ENCODE measurements at regions of chr11 and their contacts with region 1.

Region 1: DNA sequence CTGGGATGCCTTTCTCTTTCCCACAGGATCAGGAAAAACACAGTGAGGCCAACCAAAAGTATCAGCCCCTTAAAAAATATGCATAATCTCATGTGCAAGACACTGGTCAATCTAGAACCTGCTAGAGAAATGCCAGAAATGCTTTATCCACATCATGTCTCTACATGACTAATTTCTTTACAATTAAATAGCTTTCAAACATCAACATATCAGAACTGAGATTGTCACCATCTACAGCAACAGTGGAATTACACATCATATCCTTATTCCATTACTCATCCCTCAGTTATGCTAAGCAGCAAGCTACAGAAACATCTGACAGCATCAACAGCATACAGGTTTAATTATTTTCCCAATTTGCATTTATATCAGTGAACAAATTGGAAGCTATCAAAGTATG is 78.8 kb downstream of the DDIAS start:
- DNase-seq: no peak
- ATAC-seq: no peak
- H3K4me3 ChIP-seq: no peak overlapping the region
- H3K27ac ChIP-seq: no peak overlapping the region
- H3K4me1 ChIP-seq: peaks cover 6 to 8% of the 10 kb centered on the region in 2 experiments; a peak in 2 of 5 replicates
- H3K27me3 ChIP-seq: no peaks in the 10 kb centered on the region
- CTCF ChIP-seq: no peak
- EP300 ChIP-seq: no peak
- POLR2A ChIP-seq: no peak
- RAD21 ChIP-seq: no peak

Region 2: DNA sequence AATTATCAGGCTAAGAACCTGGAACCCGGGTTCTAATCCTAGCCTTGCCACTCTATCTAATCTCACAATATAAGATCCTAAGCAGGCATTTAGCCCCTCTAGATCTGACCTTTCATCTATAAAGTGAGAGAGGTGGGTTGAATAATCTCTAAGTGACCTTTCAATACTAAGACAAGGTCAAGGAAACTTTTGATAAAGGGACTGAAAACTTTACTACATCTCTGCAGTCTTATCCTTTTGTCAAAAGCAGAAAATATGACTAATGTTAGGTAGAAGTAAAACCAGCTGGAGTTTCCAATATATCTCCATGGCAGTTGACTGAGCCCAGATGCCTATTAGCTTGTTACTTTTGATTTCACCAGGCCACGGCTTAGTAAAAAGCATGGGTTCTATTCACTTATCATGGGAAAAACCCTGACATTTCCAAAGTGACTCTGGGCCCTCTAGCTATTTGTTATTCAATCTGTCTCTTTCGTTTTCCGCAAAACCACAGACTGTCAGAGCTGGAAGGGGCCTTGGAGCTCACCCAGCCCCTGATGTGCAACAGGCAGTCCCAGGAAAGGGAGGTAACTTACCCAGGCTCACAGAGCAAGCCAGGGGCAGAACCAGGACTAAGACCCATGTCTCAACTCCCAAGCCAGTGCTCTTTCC is 15.6 kb after region 1 on chr11:
- CTCF ChIA-PET with region 1: no interaction called
- POLR2A ChIA-PET with region 1: no interaction called
- in situ Hi-C with region 1: no loop called
- intact Hi-C with region 1: no loop called
- DNase-seq: no peak
- ATAC-seq: no peak
- H3K4me3 ChIP-seq: no peak overlapping the region
- H3K27ac ChIP-seq: no peak overlapping the region
- H3K4me1 ChIP-seq: peaks cover 5 to 20% of the 10 kb centered on the region in 2 experiments; a peak in 4 of 5 replicates
- H3K27me3 ChIP-seq: no peaks in the 10 kb centered on the region
- CTCF ChIP-seq: no peak
- EP300 ChIP-seq: no peak
- POLR2A ChIP-seq: no peak
- RAD21 ChIP-seq: no peak

Region 3: GRCh38 chr11:83087035-83087434 is 106.7 kb after region 1 on chr11:
- CTCF ChIA-PET with region 1: no interaction called
- POLR2A ChIA-PET with region 1: no interaction called
- in situ Hi-C with region 1: no loop called
- intact Hi-C with region 1: no loop called
- DNase-seq: no peak
- ATAC-seq: peak; percentile 56; the same call in 2 of the 3 replicates
- H3K4me3 ChIP-seq: no peak overlapping the region
- H3K27ac ChIP-seq: no peak overlapping the region
- H3K4me1 ChIP-seq: peaks cover 6 to 9% of the 10 kb centered on the region in 2 experiments; a peak in 3 of 5 replicates
- H3K27me3 ChIP-seq: no peaks in the 10 kb centered on the region
- CTCF ChIP-seq: peak; percentile 6 to 45 (median 13); a peak in 2 of 6 replicates
- EP300 ChIP-seq: no peak
- POLR2A ChIP-seq: no peak
- RAD21 ChIP-seq: peak; percentile 31 to 54; a peak in 3 of 4 replicates

Region 4: DNA sequence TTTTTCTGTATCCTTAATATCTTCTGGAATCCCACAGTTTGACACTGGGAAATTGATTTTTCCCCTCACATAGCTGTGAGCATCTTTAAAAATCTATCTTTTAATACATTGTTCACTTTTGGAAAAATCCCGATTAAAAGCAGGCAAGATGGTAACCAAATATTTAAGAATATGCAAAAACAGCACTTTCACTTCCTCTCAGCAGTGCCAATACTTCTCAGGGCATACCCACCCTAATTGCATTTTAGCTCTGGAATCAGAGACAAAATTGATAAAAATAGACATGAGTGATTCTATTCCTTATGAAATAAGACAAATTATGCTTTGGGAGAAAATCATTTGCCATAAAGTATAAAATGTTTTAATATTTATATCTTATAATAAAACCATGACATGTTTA is 474.4 kb after region 1 on chr11:
- CTCF ChIA-PET with region 1: no interaction called
- POLR2A ChIA-PET with region 1: no interaction called
- in situ Hi-C with region 1: no loop called
- intact Hi-C with region 1: loop called (anchors 5 kb)
- DNase-seq: no peak
- ATAC-seq: no peak
- H3K4me3 ChIP-seq: no peak overlapping the region
- H3K27ac ChIP-seq: no peak overlapping the region
- H3K4me1 ChIP-seq: no peaks in the 10 kb centered on the region
- H3K27me3 ChIP-seq: no peaks in the 10 kb centered on the region; a peak in 1 of 5 replicates
- CTCF ChIP-seq: no peak
- EP300 ChIP-seq: no peak
- POLR2A ChIP-seq: no peak
- RAD21 ChIP-seq: no peak